Endothelial cell of umbilical vein (primary cell): ENCODE measurements at regions of chr10 and their contacts with region 1.

Region 1: GRCh38 chr10:61750929-61751471 is 88.3 kb downstream of the CABCOCO1 start:
- DNase-seq: peak; percentile 58
- H3K4me3 ChIP-seq: no peak overlapping the region
- H3K27ac ChIP-seq: no peak overlapping the region
- H3K4me1 ChIP-seq: peaks cover 18% of the 10 kb centered on the region
- H3K27me3 ChIP-seq: no peaks in the 10 kb centered on the region
- CTCF ChIP-seq: peak; percentile 82 to 86
- POLR2A ChIP-seq: no peak

Region 2: DNA sequence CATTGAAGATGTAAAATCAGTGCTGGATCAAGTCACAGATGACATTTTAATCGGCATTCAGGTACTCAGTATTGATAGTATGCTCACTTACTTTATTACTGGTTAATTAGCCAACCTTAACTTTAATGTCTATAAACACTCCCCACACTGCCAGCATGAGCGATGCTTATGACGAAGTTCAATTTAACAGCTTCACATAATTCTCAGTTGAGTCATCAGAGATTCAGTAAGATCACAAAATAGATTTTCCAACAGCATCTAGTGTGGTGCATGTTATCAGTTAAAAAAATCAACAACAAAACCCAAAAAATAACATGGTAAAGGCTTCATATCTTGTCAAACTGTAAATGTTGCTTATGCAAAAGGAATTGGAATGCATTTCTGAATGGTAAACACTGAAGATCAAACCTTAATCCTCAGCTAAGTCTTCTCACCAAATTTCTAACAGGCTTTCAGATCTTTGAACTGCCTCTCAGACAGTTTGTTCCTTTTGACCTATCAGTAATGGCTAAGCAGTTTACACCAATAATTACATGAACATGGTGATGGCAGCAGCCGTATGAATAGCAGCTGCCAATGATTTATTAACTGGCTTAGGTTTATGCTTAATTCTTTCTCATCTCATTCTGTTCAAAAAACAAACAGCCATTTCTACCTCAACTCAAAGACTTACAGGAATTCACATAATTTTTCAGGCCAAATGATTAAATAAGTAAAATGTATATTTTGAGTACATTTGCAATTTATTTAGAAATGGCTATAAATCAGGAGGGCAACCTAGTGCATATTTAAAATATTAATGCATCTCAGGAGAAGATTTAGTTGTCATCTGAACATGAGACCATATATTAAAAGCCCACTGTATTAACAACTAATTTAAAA is 10.2 kb after region 1 on chr10:
- CTCF ChIA-PET with region 1: interaction called, 27 read pairs
- POLR2A ChIA-PET with region 1: no interaction called
- dilution Hi-C with region 1: no loop called
- intact Hi-C with region 1: no loop called
- DNase-seq: peak; percentile 59
- H3K4me3 ChIP-seq: no peak overlapping the region
- H3K27ac ChIP-seq: peak overlapping the region; percentile 22
- H3K4me1 ChIP-seq: peaks cover 14% of the 10 kb centered on the region
- H3K27me3 ChIP-seq: no peaks in the 10 kb centered on the region
- CTCF ChIP-seq: no peak
- POLR2A ChIP-seq: no peak

Region 3: GRCh38 chr10:61793760-61794703 is 43.0 kb after region 1 on chr10:
- CTCF ChIA-PET with region 1: interaction called, 3 read pairs
- POLR2A ChIA-PET with region 1: no interaction called
- dilution Hi-C with region 1: no loop called
- intact Hi-C with region 1: loop called (anchors 5 kb)
- DNase-seq: peak; percentile 70
- H3K4me3 ChIP-seq: no peak overlapping the region
- H3K27ac ChIP-seq: peak overlapping the region; percentile 20
- H3K4me1 ChIP-seq: peaks cover 21% of the 10 kb centered on the region
- H3K27me3 ChIP-seq: no peaks in the 10 kb centered on the region
- CTCF ChIP-seq: no peak
- POLR2A ChIP-seq: no peak

Region 4: DNA sequence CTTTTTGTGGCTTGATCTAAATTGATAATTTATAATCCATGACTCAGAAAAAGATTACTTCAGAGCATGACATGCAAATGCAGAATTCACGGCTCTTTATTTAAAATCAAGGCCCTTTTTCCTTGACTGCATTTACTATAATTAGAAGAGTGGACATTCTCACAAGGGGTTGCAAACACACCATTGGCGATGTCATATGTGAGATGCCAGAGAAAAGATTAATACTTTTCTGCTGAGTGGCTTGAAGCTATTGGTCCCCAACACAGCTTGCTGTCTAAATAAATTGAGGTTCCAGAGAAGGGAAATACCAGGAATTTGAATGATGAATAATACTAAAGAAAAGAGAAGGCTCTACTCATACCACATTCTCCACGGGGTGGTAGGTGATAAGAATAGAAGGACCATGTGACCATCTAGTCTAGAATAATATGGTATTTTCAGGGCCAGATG is 71.8 kb after region 1 on chr10:
- CTCF ChIA-PET with region 1: interaction called, 14 read pairs
- POLR2A ChIA-PET with region 1: no interaction called
- dilution Hi-C with region 1: no loop called
- intact Hi-C with region 1: no loop called
- DNase-seq: no peak
- H3K4me3 ChIP-seq: no peak overlapping the region
- H3K27ac ChIP-seq: no peak overlapping the region
- H3K4me1 ChIP-seq: no peaks in the 10 kb centered on the region
- H3K27me3 ChIP-seq: no peaks in the 10 kb centered on the region
- CTCF ChIP-seq: no peak
- POLR2A ChIP-seq: no peak

Region 5: DNA sequence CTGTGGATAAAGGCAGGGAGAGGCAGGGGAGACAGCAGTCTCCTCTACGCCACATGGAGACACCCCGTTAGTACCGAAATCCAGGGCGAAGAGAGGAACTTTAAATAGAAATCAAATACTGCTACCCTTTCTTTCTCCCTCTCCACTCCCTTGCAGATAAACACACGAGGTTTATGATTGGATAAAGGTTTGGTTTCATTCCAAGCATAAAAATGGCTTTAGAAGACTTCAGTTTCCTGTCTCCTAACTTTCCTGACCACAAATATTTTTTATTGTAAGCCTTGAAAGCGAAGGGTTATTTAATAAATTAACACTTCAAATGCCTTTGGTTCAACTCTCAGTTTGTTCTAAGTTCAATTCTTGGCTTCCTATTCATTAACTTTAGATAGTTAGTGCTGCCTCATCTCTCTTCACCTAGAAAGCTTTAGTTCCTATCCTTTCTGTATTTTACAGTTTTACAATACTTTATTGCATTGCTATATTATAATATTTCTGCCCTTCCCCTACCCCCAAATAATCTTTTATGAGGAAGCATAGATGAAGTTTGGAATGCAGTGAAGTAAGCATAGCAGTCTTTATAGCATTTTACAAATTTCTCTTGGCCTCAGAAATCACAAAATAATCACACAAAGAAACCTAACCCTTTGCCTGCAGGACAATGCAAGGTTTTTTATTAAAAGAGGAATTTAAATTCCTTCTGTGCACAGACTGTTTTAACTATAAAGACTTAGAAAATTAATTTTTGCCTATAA is 119.0 kb after region 1 on chr10:
- CTCF ChIA-PET with region 1: interaction called, 23 read pairs
- POLR2A ChIA-PET with region 1: no interaction called
- dilution Hi-C with region 1: no loop called
- intact Hi-C with region 1: loop called (anchors 1 kb)
- DNase-seq: peak; percentile 24
- H3K4me3 ChIP-seq: no peak overlapping the region
- H3K27ac ChIP-seq: no peak overlapping the region
- H3K4me1 ChIP-seq: no peaks in the 10 kb centered on the region
- H3K27me3 ChIP-seq: peaks cover 0 to 1% of the 10 kb centered on the region in 2 experiments
- CTCF ChIP-seq: no peak
- POLR2A ChIP-seq: no peak

Region 6: DNA sequence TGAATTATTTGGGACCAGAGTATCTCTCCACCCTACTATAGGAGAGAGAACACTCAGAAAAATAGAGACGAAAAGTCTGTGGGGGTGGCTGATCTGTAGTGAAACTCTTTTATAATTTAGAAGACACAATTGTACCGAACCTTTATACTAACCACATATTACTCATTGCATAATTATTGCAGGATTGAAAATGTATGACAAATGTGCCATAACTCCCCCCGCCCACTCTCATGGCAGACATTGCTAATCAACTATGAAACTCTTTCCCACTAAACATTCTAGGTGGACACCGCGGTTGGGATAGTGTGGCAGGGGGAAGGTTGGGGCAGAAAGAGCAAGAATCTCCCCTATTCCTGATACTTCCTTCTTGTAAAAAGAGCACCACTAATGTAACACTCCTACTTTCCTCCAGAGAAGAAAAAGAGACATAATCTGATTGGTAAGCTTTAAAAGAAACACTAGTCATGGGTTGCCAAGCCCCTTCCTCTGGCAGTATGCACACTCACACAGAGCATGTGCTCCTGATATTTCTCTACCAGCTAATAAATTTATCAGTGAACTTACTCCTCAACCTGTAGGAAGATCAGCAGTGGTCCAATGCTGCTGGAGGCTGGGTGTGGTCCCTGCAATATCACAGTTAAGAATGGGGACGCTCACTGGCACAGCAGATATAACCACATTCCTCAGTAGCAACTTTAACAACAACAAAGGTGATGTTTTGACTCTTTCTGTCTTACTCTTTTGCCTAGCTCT is 131.8 kb after region 1 on chr10:
- CTCF ChIA-PET with region 1: interaction called, 7 read pairs
- POLR2A ChIA-PET with region 1: no interaction called
- dilution Hi-C with region 1: no loop called
- intact Hi-C with region 1: loop called (anchors 5 kb)
- DNase-seq: no peak
- H3K4me3 ChIP-seq: no peak overlapping the region
- H3K27ac ChIP-seq: no peak overlapping the region
- H3K4me1 ChIP-seq: no peaks in the 10 kb centered on the region
- H3K27me3 ChIP-seq: peaks cover 4 to 8% of the 10 kb centered on the region in 2 experiments
- CTCF ChIP-seq: no peak
- POLR2A ChIP-seq: no peak

Region 7: DNA sequence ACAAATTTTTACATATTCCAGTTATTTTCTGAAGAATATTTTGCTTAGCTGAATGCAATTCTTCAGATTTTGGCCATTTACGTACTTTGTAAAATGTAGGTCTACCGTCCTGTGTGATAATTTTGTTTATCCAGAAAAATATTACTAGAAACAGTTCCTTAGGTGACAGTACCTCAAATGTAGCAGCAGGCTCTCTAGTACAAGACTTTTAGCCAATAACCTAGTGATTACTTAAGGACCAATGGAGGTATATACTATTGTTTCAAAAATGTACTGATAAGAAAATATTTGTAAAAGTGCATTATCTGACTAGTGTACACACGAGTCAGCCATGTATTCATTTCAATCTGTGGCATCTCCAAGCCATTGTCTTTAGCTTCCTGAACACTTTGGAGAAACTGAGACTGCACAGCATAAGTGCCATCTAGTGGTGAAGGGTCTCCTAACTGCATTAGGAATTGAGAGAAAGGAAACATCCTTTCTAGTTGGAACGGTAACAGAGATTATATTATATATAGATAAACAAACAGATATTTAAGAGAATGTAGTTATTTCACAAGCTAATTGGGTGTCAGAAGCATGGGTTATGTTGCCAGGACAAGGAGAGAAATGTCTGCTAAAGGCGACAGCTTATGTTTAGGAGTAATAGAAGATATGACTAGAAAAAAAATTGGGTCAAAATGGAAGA is 493.9 kb after region 1 on chr10:
- CTCF ChIA-PET with region 1: interaction called, 15 read pairs
- POLR2A ChIA-PET with region 1: no interaction called
- dilution Hi-C with region 1: no loop called
- intact Hi-C with region 1: loop called (anchors 1 kb)
- DNase-seq: peak; percentile 86
- H3K4me3 ChIP-seq: no peak overlapping the region
- H3K27ac ChIP-seq: no peak overlapping the region
- H3K4me1 ChIP-seq: peaks cover 17% of the 10 kb centered on the region
- H3K27me3 ChIP-seq: no peaks in the 10 kb centered on the region
- CTCF ChIP-seq: peak; percentile 63 to 71
- POLR2A ChIP-seq: no peak